CD4-positive, alpha-beta T cell (primary cell): ENCODE measurements at regions of chr19 and their contacts with region 1.

Region 1: DNA sequence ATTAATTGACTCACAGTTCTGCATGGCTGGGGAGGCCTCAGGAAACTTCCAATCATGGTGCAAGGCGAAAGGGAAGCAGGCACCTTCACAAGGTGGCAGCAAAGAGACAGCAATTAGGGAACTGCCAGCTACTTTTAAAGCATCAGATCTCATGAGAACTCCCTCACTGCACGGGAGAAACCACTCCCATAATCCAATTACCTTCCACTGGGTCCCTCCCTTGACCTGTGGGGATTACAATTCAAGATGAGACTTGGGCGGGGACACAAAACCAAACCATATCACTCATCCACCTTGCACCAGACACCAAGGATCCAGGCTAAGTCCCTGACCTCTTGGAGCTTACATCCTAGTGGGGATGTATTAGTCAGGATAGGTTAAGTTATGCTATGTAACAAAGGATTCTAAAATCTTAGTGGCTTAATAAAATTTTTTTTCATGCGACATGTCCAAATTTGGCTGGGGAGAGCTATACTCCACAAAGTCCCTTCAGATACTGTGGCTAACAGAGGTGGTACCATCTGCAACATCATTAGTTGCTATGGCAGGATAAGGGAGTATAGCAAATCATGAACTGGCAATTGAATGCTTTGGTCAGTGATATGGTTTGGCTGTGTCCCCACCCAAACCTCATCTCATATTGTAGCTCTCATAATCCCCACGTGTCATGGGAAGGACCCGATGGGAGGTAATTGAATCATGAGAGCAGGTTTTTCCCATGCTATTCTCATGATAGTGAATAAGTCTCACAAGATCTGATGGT is 8.3 kb upstream of the FAM187B start:
- DNase-seq: peak in 9 of 14 experiments; percentile 23 to 66 (median 48)
- ATAC-seq: no peak
- H3K4me3 ChIP-seq: no peak overlapping the region
- H3K4me3 Mint-ChIP-seq: no peak overlapping the region
- H3K27ac ChIP-seq: no peak overlapping the region
- H3K27ac Mint-ChIP-seq: no peak overlapping the region
- H3K4me1 ChIP-seq: peaks cover 17% of the 10 kb centered on the region
- H3K4me1 Mint-ChIP-seq: peaks cover 33% of the 10 kb centered on the region
- H3K27me3 ChIP-seq: no peaks in the 10 kb centered on the region
- H3K27me3 Mint-ChIP-seq: no peaks in the 10 kb centered on the region
- CTCF ChIP-seq: peak; percentile 48

Region 2: GRCh38 chr19:35193869-35194665 is 42.8 kb before region 1 on chr19:
- CTCF ChIA-PET with region 1: interaction called, 3 read pairs
- POLR2A ChIA-PET with region 1: interaction called, 3 read pairs
- intact Hi-C with region 1: loop called in 1 of 2 experiments (anchors 5 kb)
- DNase-seq: no peak
- ATAC-seq: no peak
- H3K4me3 ChIP-seq: no peak overlapping the region
- H3K4me3 Mint-ChIP-seq: no peak overlapping the region
- H3K27ac ChIP-seq: no peak overlapping the region
- H3K27ac Mint-ChIP-seq: no peak overlapping the region
- H3K4me1 ChIP-seq: peaks cover 5% of the 10 kb centered on the region
- H3K4me1 Mint-ChIP-seq: peaks cover 16% of the 10 kb centered on the region
- H3K27me3 ChIP-seq: no peaks in the 10 kb centered on the region
- H3K27me3 Mint-ChIP-seq: no peaks in the 10 kb centered on the region
- CTCF ChIP-seq: peak; percentile 27

Region 3: DNA sequence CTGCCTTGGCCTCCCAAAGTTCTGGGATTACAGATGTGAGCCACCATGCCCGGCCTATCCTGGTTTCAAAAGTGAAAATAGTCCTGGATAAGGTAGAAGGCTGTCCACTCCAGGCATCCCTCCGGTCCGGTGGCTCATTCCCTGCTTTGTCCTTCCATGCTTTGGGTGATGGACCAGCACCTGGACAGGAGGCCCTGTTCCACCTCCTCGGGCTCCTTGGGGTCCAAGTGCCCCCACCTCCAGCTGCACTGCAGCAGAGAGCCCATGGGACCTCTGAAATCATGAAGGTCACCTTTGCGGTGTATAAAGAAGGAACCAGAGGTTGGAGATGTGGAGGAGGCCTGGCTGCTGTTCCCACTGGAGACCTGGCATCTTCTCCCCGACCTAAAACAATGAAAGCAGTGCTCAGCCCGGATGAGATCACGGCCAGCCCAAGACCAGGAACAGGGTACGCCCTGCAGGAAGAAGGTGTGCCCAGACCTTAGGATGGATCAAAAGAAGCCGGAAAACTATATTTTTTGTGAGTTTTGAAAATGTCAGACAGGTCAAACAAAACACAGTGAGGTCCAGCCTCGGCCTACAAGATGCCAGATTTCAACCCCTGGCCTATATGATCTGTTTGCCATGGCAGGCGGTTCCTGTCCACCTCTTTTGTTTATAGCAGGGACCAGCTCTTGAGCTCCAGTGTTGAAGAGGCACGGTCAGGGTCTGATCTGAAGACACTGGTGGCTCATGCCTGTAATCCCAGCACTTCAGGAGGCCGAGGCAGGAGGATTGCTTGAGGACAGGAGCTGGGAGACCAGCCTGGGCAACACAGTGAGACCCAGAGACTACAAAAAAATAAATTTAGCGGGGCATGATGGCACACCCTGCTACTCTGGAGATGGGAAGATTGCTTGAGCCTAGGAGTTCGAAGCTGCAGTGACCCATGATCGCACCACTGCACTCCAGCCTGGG is 17.8 kb after region 1 on chr19:
- CTCF ChIA-PET with region 1: no interaction called
- POLR2A ChIA-PET with region 1: interaction called, 18 read pairs
- intact Hi-C with region 1: no loop called
- DNase-seq: no peak
- ATAC-seq: no peak
- H3K4me3 ChIP-seq: no peak overlapping the region
- H3K4me3 Mint-ChIP-seq: no peak overlapping the region
- H3K27ac ChIP-seq: no peak overlapping the region
- H3K27ac Mint-ChIP-seq: no peak overlapping the region
- H3K4me1 ChIP-seq: peaks cover 24% of the 10 kb centered on the region
- H3K4me1 Mint-ChIP-seq: peaks cover 26% of the 10 kb centered on the region
- H3K27me3 ChIP-seq: no peaks in the 10 kb centered on the region
- H3K27me3 Mint-ChIP-seq: peaks cover 3% of the 10 kb centered on the region
- CTCF ChIP-seq: no peak

Region 4: DNA sequence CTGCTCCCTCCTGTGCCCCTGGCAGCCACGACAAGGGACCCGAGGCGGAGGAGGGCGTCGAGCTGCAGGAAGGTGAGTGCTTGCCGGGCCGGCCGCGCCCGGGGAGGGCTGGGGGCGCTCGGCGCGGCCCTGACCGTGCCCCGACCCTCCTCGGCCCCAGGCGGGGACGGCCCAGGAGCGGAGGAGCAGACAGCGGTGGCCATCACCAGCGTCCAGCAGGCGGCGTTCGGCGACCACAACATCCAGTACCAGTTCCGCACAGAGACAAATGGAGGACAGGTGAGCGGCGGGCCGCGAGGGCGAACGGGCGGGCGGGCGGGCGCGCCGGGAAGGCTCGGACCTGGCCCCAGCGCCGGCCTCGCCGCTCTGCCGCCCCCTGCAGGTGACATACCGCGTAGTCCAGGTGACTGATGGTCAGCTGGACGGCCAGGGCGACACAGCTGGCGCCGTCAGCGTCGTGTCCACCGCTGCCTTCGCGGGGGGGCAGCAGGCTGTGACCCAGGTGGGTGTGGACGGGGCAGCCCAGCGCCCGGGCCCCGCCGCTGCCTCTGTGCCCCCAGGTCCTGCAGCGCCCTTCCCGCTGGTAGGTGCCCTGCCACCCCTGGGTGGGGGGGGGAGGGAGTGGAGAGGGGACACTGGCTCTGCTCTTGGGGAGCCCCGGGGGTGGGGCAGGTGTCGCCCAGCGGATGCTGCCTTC is 32.8 kb after region 1 on chr19:
- CTCF ChIA-PET with region 1: interaction called, 6 read pairs
- POLR2A ChIA-PET with region 1: interaction called, 11 read pairs
- intact Hi-C with region 1: no loop called
- DNase-seq: peak; percentile 63 to 90 (median 74)
- ATAC-seq: peak; percentile 46
- H3K4me3 ChIP-seq: peak overlapping the region; percentile 32
- H3K4me3 Mint-ChIP-seq: peak overlapping the region; percentile 83
- H3K27ac ChIP-seq: peak overlapping the region in 1 of 2 donors; percentile 65
- H3K27ac Mint-ChIP-seq: peak overlapping the region; percentile 81
- H3K4me1 ChIP-seq: peaks cover 54% of the 10 kb centered on the region
- H3K4me1 Mint-ChIP-seq: peaks cover 41% of the 10 kb centered on the region
- H3K27me3 ChIP-seq: no peaks in the 10 kb centered on the region
- H3K27me3 Mint-ChIP-seq: no peaks in the 10 kb centered on the region
- CTCF ChIP-seq: peak; percentile 77

Region 5: DNA sequence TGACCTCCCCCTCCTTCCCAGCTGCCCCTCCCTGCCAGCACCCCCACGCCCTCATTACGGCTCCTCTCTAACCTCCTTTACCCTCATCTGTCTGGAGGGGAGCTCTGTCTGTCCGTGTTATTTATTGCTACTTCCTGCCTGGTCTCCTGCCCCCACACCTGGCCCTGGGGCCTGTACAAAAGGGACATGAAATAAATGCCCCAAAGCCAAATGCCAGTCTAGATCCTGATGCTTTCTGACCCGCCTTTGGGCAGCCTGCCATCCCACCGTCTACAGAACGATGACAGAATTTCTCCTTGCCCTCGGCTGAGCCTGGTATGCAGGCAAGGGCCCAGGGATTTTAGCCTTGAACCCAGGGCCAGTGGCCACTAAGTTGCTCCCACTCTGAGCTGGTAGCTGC is 76.8 kb after region 1 on chr19:
- CTCF ChIA-PET with region 1: no interaction called
- POLR2A ChIA-PET with region 1: no interaction called
- intact Hi-C with region 1: no loop called
- DNase-seq: no peak
- ATAC-seq: no peak
- H3K4me3 ChIP-seq: no peak overlapping the region
- H3K4me3 Mint-ChIP-seq: no peak overlapping the region
- H3K27ac ChIP-seq: no peak overlapping the region
- H3K27ac Mint-ChIP-seq: no peak overlapping the region
- H3K4me1 ChIP-seq: peaks cover 3% of the 10 kb centered on the region
- H3K4me1 Mint-ChIP-seq: no peaks in the 10 kb centered on the region
- H3K27me3 ChIP-seq: no peaks in the 10 kb centered on the region
- H3K27me3 Mint-ChIP-seq: no peaks in the 10 kb centered on the region
- CTCF ChIP-seq: no peak